ENCODE measurements at regions of chr17 and their contacts with region 1.

Region 1: DNA sequence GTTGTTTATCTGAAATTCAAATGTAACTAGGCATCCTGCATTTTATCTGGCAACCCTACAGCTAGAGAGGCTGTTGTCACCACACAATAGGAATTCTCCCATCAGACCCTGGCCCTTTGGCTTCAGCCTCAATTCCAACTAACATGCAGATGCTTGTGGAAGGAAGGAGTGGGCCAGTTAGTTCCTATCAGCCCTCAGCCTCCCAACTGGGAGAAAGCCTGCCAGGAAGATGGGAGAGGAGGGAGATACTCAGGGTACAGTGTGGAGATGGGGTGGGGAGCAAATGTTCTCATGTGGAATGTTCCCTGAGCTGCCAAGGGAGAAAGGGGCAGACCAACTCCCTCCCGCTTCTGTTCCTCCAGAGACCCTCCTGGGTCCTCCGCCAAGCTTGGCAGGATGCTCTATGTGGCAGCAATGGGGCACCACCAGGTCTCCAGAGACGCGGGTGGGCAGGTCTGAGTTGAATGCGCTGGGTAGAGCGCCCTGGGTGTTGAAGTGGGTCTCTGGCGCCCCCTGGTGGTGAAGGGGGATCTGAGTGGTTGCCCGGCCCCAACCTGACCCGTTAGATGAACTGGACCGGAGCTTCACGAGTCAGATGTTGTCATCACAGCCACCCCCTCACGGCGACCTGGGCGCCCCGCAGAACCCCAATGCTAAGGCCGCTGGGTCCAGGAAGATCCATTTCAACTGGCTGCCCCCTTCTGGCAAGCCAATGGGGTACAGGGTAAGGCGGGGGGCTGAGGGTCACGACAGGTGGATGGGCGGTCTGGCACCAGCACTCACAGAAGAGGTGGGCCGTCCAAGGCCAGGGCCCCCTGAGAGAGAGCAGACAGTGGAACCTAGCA is 15.2 kb downstream of the GALK1 start:
- DNase-seq: peak; percentile 81 to 97 (median 91)

Region 2: DNA sequence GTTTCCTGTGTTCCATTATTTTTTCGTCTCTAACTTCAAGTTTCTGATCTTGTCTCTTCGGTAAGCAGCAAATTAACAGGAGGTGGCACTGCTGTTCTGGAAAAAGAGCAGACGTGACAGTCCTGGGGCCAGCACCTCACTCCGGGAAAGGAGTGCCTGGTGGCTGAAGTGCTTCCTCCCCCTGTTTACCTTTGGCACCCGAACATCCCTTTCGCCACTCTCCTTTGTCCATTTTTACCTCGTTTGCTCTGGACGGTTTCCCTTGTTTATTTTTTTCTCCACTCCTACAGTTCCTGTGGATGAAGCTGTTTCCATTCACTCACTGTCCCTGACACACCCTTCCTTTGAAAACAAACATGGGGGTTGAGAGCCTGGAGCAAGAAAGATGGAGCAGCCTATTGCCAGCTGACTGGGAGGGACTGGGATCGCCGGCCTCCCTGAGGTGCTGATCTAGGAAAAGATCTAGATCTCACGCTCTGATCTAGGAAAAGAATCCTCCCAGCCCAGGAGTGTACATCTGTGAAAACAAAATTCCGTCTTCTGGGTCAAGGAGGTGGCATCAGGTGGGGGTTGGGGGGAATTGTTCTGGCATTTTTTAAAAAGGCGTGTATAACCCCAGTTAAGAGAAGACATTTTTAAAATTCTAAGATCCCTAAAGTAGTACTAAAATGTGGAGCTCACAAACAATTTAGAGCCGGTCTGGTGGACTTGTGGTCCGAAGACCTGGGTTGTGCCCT is 69.9 kb before region 1 on chr17:
- intact Hi-C with region 1: loop called (anchors 5 kb)
- DNase-seq: peak in 26 of 42 donors; percentile 27 to 85 (median 57)

Region 3: DNA sequence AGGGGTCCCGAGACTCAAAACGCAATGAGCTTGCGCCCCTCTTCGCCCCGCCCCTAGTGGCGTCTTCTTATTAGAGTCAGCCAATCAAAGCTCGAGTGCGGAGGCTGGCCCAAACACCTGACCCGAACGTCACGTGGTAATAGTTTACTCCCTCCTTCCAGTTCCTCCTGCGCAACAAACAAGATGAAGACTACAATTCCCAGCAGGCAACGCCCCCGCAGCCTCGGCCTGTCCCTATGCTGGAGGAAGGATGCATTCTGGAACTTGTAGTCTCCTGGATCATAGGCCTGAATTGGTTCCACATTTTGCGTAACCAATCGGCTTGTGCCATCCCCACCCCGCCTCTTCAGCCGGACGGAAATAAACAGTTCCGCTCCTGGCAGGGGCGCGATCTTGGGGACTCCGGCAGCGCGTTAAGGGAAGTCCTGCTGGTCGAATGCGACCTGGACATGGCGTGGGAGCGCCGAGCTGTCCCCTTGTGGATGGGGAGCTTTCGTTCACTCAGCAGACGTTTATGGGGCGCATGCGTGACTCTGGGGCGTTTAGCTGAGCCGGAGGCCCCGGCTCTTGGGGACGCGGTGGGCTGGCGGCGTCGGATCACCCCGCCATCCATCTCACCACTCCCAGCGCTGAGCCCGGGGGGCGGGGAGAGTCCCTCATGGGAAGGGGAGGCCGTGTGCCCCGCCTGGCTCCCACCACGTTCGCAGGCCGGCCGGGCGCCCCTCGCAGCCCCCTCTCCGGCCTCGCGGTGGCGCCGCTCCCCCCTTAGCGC is 105.7 kb after region 1 on chr17 and contains the start of gene WBP2:
- intact Hi-C with region 1: no loop called
- DNase-seq: peak; percentile 95 to 100 (median 99)